ENCODE measurements at regions of chr22 and their contacts with region 1.

Region 1: GRCh38 chr22:20507253-20508066 is at the start of gene MED15:
- DNase-seq: peak; percentile 86
- H3K4me3 Mint-ChIP-seq: peak within 1 kb of the TSS; percentile 96
- H3K27ac Mint-ChIP-seq: peak within 1 kb of the TSS; percentile 91
- H3K4me1 Mint-ChIP-seq: peaks cover 49% of the 10 kb centered on the region
- H3K27me3 Mint-ChIP-seq: no peaks in the 10 kb centered on the region
- total RNA-seq, gene MED15: 123 and 129 TPM in 2 replicates

Region 2: DNA sequence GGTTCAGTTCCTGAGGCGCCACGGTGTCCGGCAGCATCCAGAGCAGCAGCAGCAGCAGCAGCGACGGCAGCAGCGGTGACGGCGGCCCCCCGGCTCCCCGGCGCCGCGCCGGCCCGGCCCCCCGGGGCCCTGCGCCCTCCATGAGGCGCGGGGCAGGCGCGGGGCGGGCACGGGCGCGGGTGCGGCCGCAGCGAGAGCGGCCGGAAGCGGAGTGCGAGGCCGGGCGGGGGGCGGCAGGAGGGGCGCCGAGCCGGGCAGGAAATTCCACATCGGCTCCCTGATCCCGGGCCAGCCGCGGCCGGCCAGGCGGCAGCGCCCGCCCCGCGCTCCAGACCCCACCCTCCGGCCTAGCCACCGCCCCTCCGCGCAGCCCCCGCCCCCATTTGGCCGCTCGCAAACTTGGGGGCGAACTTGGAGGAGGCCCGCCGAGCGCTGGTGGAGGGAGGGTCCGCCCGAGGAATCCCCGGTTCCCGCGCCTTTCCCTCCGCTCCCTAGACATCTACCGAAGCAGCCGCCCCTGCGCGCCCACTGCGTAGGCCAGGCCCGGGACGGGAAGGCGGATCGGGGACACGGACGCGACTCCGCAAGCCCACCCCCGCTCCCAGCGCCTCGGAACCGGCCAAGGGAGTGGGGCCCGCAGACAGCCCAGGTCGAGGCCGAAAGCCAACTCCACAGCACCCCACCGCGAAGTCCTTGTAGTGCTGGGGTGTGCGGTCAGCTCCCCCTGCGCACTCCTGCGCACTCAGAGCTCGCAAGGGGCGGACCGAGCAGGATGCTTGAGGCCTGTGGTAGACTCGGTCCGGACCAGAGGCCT is 69.6 kb before region 1 on chr22 and contains the start of gene SCARF2:
- intact Hi-C with region 1: no loop called
- DNase-seq: no peak
- H3K4me3 Mint-ChIP-seq: peak within 1 kb of the TSS; percentile 61
- H3K27ac Mint-ChIP-seq: no peak within 1 kb of the TSS
- H3K4me1 Mint-ChIP-seq: peaks cover 5% of the 10 kb centered on the region
- H3K27me3 Mint-ChIP-seq: peaks cover 43% of the 10 kb centered on the region
- total RNA-seq, gene SCARF2: 0.55 and 0.62 TPM in 2 replicates

Region 3: DNA sequence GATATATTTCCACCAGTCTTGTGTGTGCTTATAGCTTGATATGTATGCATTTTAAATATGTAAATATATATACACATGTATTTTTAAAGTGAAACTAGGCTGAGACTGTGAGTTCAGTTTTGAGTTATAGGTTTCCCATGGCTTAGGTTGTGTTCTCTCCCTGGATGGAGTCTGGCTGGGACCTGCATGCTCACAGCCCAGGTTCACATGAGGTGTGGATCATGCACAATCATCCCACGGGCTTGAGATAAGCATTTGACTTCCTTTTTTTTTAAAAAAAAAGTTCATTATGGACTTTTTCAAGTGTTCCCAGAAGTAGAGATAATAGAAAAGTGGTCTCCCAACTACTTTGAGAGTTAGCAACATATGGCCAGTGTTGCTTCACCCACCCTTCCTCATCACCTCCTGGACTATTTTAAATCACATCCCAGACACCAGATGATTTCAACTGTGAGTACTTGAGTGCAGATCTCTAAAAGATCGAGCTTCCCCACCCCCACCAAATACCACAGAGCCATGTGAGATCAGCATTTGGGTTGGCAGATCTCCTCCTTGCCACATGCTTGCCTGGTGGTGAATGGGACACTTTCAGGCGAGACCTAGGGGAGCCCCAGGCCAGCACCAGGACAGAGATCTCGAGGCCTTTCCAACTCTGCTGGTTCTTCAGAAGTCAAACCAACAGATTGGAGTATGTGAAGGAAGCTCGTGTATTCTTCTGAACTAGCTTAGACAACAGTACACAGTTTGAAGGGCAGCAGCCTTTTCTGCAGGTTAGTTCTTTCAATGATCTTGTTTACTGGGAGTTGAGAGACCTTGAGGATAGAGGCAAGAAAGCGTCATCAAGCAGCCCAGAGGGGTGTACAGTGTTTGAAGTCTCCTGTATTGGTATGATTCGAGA is 15.9 kb after region 1 on chr22:
- intact Hi-C with region 1: loop called (anchors 1 kb)
- DNase-seq: no peak
- H3K4me3 Mint-ChIP-seq: peak overlapping the region; percentile 24
- H3K27ac Mint-ChIP-seq: peak overlapping the region; percentile 77
- H3K4me1 Mint-ChIP-seq: peaks cover 54% of the 10 kb centered on the region
- H3K27me3 Mint-ChIP-seq: no peaks in the 10 kb centered on the region

Region 4: DNA sequence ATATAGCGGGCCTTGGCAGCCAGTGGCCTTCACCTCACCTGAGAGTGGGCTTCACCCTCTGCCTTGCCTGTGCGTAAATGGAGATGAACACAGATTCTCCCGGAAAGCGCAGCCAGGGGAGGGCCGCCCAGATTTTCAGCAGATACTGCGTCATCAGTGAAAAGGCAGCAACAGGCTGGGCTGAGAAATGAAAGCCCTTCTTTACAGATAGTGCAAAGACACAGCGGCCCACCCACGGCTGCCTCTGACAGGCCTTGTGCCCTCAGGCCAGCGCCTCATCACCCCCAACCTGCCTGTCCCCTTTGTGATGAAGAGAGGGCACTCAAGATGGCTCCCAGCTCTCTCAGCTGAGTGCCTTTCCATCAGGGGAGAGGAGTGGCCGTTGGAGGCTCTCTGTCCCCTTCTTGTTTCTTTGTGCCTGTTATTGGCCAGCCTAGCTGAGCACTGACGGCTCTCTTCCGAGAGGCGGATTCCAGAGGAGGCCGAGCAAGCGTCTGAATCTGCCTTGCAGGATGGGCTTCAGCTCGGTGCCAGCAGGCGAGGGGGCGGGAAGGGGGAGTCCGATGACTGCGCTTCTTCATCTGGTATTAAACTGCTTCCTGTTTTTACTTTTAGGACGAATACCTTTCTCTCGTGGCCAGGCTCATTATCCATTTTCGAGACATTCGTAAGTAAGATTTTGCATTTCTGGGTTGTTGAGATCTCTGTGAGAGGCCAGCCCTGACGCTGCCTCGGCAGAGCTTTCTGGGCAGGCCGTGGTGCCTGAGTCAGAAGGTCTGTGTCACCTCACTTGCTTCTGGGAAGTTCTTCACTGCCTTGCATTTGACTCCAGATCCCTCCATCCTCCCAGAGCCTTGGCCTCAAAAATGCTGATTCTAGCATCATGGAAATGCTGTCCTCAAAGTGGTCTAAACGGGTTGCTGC is 43.6 kb after region 1 on chr22:
- intact Hi-C with region 1: loop called (anchors 2 kb)
- DNase-seq: peak; percentile 18
- H3K4me3 Mint-ChIP-seq: peak overlapping the region; percentile 54
- H3K27ac Mint-ChIP-seq: peak overlapping the region; percentile 94
- H3K4me1 Mint-ChIP-seq: peaks cover 66% of the 10 kb centered on the region
- H3K27me3 Mint-ChIP-seq: no peaks in the 10 kb centered on the region